ENCODE measurements at regions of chr6 and their contacts with region 1.

Region 1: GRCh38 chr6:34362909-34363680 is 29.4 kb downstream of the NUDT3 start:
- DNase-seq: no peak
- ATAC-seq: peak; percentile 60 to 71
- H3K4me3 ChIP-seq: no peak overlapping the region
- H3K27ac ChIP-seq: peak overlapping the region; percentile 66
- H3K4me1 ChIP-seq: peaks cover 3% of the 10 kb centered on the region
- H3K27me3 ChIP-seq: no peaks in the 10 kb centered on the region

Region 2: GRCh38 chr6:34324738-34325444 is 38.2 kb before region 1 on chr6:
- intact Hi-C with region 1: no loop called
- DNase-seq: peak; percentile 45 to 77 (median 66)
- ATAC-seq: peak; percentile 87 to 93
- H3K4me3 ChIP-seq: no peak overlapping the region
- H3K27ac ChIP-seq: no peak overlapping the region
- H3K4me1 ChIP-seq: peaks cover 1% of the 10 kb centered on the region
- H3K27me3 ChIP-seq: no peaks in the 10 kb centered on the region

Region 3: GRCh38 chr6:34436803-34437643 is 73.9 kb after region 1 on chr6:
- intact Hi-C with region 1: no loop called
- DNase-seq: no peak
- ATAC-seq: no peak
- H3K4me3 ChIP-seq: no peak overlapping the region
- H3K27ac ChIP-seq: no peak overlapping the region
- H3K4me1 ChIP-seq: no peaks in the 10 kb centered on the region
- H3K27me3 ChIP-seq: no peaks in the 10 kb centered on the region

Region 4: DNA sequence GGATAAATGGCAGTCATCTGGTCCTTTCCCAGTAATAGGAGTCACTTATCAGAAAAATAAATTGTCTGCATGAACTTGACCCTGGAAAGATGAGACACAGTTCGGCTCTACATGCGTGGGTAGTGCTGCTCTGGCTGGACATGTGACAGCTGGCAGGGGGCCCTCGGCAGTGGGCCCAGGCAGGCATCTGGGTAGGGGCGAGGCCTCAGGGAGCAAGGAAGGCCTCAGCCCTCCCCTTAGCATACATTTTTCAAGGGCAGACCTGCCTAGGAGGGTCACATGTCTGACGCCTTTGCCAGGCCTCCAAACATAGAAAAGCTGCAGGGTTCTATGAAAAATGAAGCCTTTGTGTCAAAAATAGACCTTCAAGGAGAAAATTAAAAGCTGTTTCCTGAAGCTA is 346.3 kb after region 1 on chr6:
- intact Hi-C with region 1: loop called in 1 of 4 experiments (anchors 10 kb)
- DNase-seq: peak; percentile 72 to 94 (median 91)
- ATAC-seq: peak; percentile 94 to 96
- H3K4me3 ChIP-seq: no peak overlapping the region
- H3K27ac ChIP-seq: no peak overlapping the region
- H3K4me1 ChIP-seq: no peaks in the 10 kb centered on the region
- H3K27me3 ChIP-seq: no peaks in the 10 kb centered on the region

Region 5: DNA sequence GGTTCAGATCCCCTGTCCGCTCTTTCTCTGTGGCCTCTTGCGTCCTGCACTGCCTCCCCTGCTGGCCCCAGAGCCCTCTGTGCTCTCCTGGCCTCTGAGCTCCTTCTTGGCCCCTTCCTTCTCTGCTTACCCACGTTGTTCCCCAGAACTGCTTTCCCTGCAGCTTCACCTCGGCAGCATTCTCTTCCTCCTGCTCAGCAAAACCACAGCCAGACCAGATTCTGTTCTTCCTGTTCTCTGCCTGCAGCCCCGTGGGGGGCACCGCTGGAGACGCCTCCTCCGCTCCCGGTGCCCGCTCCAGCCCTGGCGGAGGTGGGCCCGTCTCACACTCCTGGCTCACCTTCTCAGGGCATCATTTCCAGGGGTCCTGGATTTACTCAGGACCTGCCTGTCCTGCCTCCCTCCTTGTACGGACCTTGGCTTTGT is 718.3 kb after region 1 on chr6:
- intact Hi-C with region 1: no loop called
- DNase-seq: no peak
- ATAC-seq: no peak
- H3K4me3 ChIP-seq: no peak overlapping the region
- H3K27ac ChIP-seq: no peak overlapping the region
- H3K4me1 ChIP-seq: no peaks in the 10 kb centered on the region
- H3K27me3 ChIP-seq: no peaks in the 10 kb centered on the region